ENCODE measurements at regions of chr7 and their contacts with region 1.

Region 1: DNA sequence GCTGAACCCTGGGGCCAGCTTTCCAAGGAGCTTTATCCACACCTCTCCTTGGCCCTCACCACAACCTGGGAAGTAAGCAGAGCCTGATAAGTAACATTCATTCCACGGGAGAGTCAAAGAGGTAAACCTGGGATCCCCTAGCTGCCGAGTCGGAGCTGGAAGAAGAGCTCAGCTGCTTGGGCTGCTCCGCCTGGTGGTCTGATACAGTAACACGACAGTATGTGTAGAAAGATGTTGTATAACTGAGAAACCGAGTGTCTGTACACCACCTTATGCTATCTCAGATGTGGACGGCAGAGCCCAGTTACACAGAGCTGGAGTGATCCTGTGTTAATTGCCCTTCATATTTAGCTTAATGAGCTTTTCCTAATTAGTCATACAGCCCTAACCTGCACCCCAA is 151.3 kb upstream of the KMT2E start:
- DNase-seq: no peak
- ATAC-seq: peak; percentile 69; the same call in 1 of the 2 replicates
- H3K4me3 ChIP-seq: no peak overlapping the region
- H3K27ac ChIP-seq: no peak overlapping the region
- H3K4me1 ChIP-seq: no peaks in the 10 kb centered on the region
- H3K27me3 ChIP-seq: peaks cover 12% of the 10 kb centered on the region
- CTCF ChIP-seq: peak; percentile 57

Region 2: GRCh38 chr7:104231054-104232046 is 631.4 kb before region 1 on chr7:
- CTCF ChIA-PET with region 1: interaction called, 13 read pairs
- POLR2A ChIA-PET with region 1: no interaction called
- in situ Hi-C with region 1: no loop called
- intact Hi-C with region 1: no loop called
- DNase-seq: peak; percentile 57
- ATAC-seq: peak; percentile 98
- H3K4me3 ChIP-seq: no peak overlapping the region
- H3K27ac ChIP-seq: no peak overlapping the region
- H3K4me1 ChIP-seq: no peaks in the 10 kb centered on the region
- H3K27me3 ChIP-seq: peaks cover 9% of the 10 kb centered on the region
- CTCF ChIP-seq: peak; percentile 89

Measured in Panc1 (cell line).